ENCODE measurements at regions of chr11 and their contacts with region 1.

Region 1: GRCh38 chr11:58133309-58134076 is 8.2 kb upstream of the OR9I1 start:
- DNase-seq: peak; percentile 45 to 51
- H3K4me3 ChIP-seq: no peak overlapping the region
- H3K4me3 Mint-ChIP-seq: no peak overlapping the region
- H3K27ac Mint-ChIP-seq: no peak overlapping the region
- H3K4me1 ChIP-seq: 0 out of 2 replicates have a peak, but pooled peaks cover 5% of the 10 kb centered on the region
- H3K4me1 Mint-ChIP-seq: peaks cover 12% of the 10 kb centered on the region
- H3K27me3 ChIP-seq: no peaks in the 10 kb centered on the region
- H3K27me3 Mint-ChIP-seq: no peaks in the 10 kb centered on the region
- CTCF ChIP-seq: peak in 1 of 2 experiments; percentile 29

Region 2: DNA sequence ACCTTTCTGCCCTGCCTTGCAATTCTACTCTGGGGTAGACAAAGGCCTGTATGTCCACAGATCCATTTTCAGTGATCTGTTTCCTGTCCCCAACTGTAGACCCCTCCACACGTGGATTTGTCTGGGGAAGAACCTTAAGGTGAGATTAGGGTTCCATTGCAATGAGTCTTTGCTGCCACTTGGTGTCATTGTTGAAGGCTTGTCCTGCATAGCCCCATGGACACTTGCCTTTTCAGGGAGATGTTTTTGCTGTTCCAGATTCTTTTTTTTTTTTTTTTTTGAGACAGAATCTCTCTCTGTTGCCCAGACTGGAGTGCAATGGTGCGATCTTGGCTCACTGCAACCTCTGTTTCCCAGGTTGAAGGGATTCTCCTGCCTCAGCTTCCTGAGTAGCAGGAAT is 514.2 kb before region 1 on chr11:
- CTCF ChIA-PET with region 1: no interaction called
- POLR2A ChIA-PET with region 1: no interaction called
- intact Hi-C with region 1: no loop called
- DNase-seq: no peak
- H3K4me3 ChIP-seq: no peak overlapping the region
- H3K4me3 Mint-ChIP-seq: no peak overlapping the region
- H3K27ac Mint-ChIP-seq: no peak overlapping the region
- H3K4me1 ChIP-seq: no peaks in the 10 kb centered on the region
- H3K4me1 Mint-ChIP-seq: no peaks in the 10 kb centered on the region
- H3K27me3 ChIP-seq: no peaks in the 10 kb centered on the region
- H3K27me3 Mint-ChIP-seq: no peaks in the 10 kb centered on the region
- CTCF ChIP-seq: peak in 1 of 2 experiments; percentile 15

Region 3: GRCh38 chr11:58112391-58112790 is 21.1 kb before region 1 on chr11:
- CTCF ChIA-PET with region 1: no interaction called
- POLR2A ChIA-PET with region 1: no interaction called
- intact Hi-C with region 1: no loop called
- DNase-seq: no peak
- H3K4me3 ChIP-seq: no peak overlapping the region
- H3K4me3 Mint-ChIP-seq: no peak overlapping the region
- H3K27ac Mint-ChIP-seq: no peak overlapping the region
- H3K4me1 ChIP-seq: no peaks in the 10 kb centered on the region
- H3K4me1 Mint-ChIP-seq: no peaks in the 10 kb centered on the region
- H3K27me3 ChIP-seq: no peaks in the 10 kb centered on the region
- H3K27me3 Mint-ChIP-seq: peaks cover 9% of the 10 kb centered on the region
- CTCF ChIP-seq: no peak

Region 4: GRCh38 chr11:58165504-58166106 is 32.1 kb after region 1 on chr11:
- CTCF ChIA-PET with region 1: interaction called, 4 read pairs
- POLR2A ChIA-PET with region 1: no interaction called
- intact Hi-C with region 1: loop called (anchors 1 kb)
- DNase-seq: peak; percentile 70 to 79
- H3K4me3 ChIP-seq: no peak overlapping the region
- H3K4me3 Mint-ChIP-seq: peak overlapping the region; percentile 47
- H3K27ac Mint-ChIP-seq: peak overlapping the region; percentile 79
- H3K4me1 ChIP-seq: peaks cover 38% of the 10 kb centered on the region
- H3K4me1 Mint-ChIP-seq: peaks cover 36% of the 10 kb centered on the region
- H3K27me3 ChIP-seq: no peaks in the 10 kb centered on the region
- H3K27me3 Mint-ChIP-seq: no peaks in the 10 kb centered on the region
- CTCF ChIP-seq: no peak

Region 5: GRCh38 chr11:58192229-58192628 is 58.7 kb after region 1 on chr11:
- CTCF ChIA-PET with region 1: no interaction called
- POLR2A ChIA-PET with region 1: no interaction called
- intact Hi-C with region 1: loop called (anchors 2 kb)
- DNase-seq: peak; percentile 71 to 87
- H3K4me3 ChIP-seq: no peak overlapping the region
- H3K4me3 Mint-ChIP-seq: peak overlapping the region; percentile 27
- H3K27ac Mint-ChIP-seq: peak overlapping the region; percentile 83
- H3K4me1 ChIP-seq: peaks cover 44% of the 10 kb centered on the region
- H3K4me1 Mint-ChIP-seq: peaks cover 37% of the 10 kb centered on the region
- H3K27me3 ChIP-seq: no peaks in the 10 kb centered on the region
- H3K27me3 Mint-ChIP-seq: no peaks in the 10 kb centered on the region
- CTCF ChIP-seq: no peak

Region 6: DNA sequence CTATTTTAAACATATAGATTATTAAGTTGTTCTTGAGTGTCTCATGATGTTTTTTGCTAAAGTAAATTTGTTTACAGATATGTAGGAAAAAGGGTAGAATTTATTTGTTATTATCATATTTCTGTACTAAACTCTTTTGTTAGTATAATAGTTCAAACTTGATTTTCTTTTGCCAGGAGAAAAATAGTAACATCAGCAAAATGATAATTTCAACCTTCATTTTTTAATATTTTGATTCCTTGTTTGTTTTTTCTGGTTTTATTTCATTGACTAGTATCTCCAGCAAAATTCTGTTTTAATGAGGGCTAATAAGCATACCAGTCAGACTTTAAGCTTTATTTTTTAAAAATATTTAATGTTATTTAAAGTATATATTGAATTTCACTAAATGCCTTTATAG is 83.0 kb after region 1 on chr11:
- CTCF ChIA-PET with region 1: no interaction called
- POLR2A ChIA-PET with region 1: no interaction called
- intact Hi-C with region 1: no loop called
- DNase-seq: no peak
- H3K4me3 ChIP-seq: no peak overlapping the region
- H3K4me3 Mint-ChIP-seq: no peak overlapping the region
- H3K27ac Mint-ChIP-seq: no peak overlapping the region
- H3K4me1 ChIP-seq: no peaks in the 10 kb centered on the region
- H3K4me1 Mint-ChIP-seq: peaks cover 5% of the 10 kb centered on the region
- H3K27me3 ChIP-seq: no peaks in the 10 kb centered on the region
- H3K27me3 Mint-ChIP-seq: no peaks in the 10 kb centered on the region
- CTCF ChIP-seq: no peak

Region 7: GRCh38 chr11:58243954-58244353 is 110.5 kb after region 1 on chr11:
- CTCF ChIA-PET with region 1: no interaction called
- POLR2A ChIA-PET with region 1: no interaction called
- intact Hi-C with region 1: loop called (anchors 5 kb)
- DNase-seq: no peak
- H3K4me3 ChIP-seq: no peak overlapping the region
- H3K4me3 Mint-ChIP-seq: no peak overlapping the region
- H3K27ac Mint-ChIP-seq: no peak overlapping the region
- H3K4me1 ChIP-seq: no peaks in the 10 kb centered on the region
- H3K4me1 Mint-ChIP-seq: no peaks in the 10 kb centered on the region
- H3K27me3 ChIP-seq: no peaks in the 10 kb centered on the region
- H3K27me3 Mint-ChIP-seq: no peaks in the 10 kb centered on the region
- CTCF ChIP-seq: no peak

Measured in Caco-2 (cell line).